HEK293 (cell line): ENCODE measurements at regions of chr3 and their contacts with region 1.

Region 1: GRCh38 chr3:51995346-51996163 is at the start of gene RPL29:
- H3K4me3 ChIP-seq: peak within 1 kb of the TSS; percentile 100
- H3K27ac ChIP-seq: peak within 1 kb of the TSS; percentile 98
- H3K4me1 ChIP-seq: no peaks in the 10 kb centered on the region
- CTCF ChIP-seq: no peak; the same call in 1 of the 2 replicates

Region 2: GRCh38 chr3:51941798-51942602 is 53.6 kb before region 1 on chr3 and contains the starts of genes PARP3 and RRP9:
- CTCF ChIA-PET with region 1: interaction called, 7 read pairs
- POLR2A ChIA-PET with region 1: interaction called, 20 read pairs
- H3K4me3 ChIP-seq: peak within 1 kb of the TSS; percentile 70
- H3K27ac ChIP-seq: peak within 1 kb of the TSS; percentile 81
- H3K4me1 ChIP-seq: peaks cover 4% of the 10 kb centered on the region
- CTCF ChIP-seq: peak; percentile 98

Region 3: DNA sequence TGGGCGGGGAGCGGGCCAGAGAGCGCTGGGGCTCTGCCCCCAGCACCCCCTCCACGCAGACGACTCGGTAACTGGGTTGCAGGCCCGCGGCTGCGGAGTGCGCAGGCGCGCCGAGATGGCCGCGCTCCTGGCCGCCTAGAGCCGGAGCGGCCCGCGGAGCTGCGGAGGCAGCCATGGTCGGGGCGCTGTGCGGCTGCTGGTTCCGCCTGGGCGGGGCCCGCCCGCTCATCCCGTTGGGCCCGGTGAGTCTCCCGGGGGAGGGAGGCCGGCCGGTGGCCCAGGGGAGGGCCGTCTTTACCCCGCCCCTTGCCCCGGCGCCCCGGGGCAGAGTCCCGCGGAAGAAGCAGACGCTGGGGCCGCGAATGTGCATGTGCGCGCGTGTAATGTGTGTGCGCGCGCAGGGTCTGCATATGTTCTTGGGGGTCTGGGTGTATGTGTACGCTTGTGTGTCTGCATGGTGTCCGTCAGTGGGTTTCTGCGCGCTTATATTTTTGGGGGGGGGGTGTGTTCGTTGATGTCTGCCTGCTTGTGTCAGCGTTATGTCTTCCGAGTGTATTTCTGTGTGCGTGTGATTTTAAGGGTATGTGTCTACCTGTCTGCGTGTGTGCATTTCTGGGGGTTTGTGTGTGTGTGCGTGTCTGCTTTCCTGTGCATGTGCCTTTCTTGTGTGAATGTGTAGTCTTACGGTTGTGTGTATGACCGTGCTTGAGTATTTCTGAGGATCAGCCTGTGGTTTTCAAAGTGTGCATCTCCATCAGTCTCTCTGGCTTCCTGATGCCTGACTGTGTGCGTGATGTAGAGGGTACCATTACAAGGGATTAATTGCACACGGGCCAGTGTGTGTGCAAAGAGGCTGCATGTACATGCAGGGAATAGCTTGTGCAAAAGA is 20.3 kb before region 1 on chr3 and contains the start of gene ABHD14A:
- CTCF ChIA-PET with region 1: no interaction called
- POLR2A ChIA-PET with region 1: interaction called, 11 read pairs
- H3K4me3 ChIP-seq: peak within 1 kb of the TSS; percentile 44
- H3K27ac ChIP-seq: no peak within 1 kb of the TSS; the same call in 1 of the 2 replicates
- H3K4me1 ChIP-seq: no peaks in the 10 kb centered on the region
- CTCF ChIP-seq: no peak

Region 4: GRCh38 chr3:51982782-51983577 is 12.6 kb before region 1 on chr3 and contains the start of gene ACY1:
- CTCF ChIA-PET with region 1: interaction called, 5 read pairs
- POLR2A ChIA-PET with region 1: interaction called, 47 read pairs
- H3K4me3 ChIP-seq: peak within 1 kb of the TSS; percentile 41
- H3K27ac ChIP-seq: peak within 1 kb of the TSS; percentile 60; the same call in 1 of the 2 replicates
- H3K4me1 ChIP-seq: no peaks in the 10 kb centered on the region
- CTCF ChIP-seq: no peak; the same call in none of the 2 replicates

Region 5: GRCh38 chr3:52099001-52099401 is 103.4 kb after region 1 on chr3:
- CTCF ChIA-PET with region 1: no interaction called
- POLR2A ChIA-PET with region 1: no interaction called
- H3K4me3 ChIP-seq: no peak overlapping the region
- H3K27ac ChIP-seq: no peak overlapping the region
- H3K4me1 ChIP-seq: no peaks in the 10 kb centered on the region
- CTCF ChIP-seq: no peak

Region 6: DNA sequence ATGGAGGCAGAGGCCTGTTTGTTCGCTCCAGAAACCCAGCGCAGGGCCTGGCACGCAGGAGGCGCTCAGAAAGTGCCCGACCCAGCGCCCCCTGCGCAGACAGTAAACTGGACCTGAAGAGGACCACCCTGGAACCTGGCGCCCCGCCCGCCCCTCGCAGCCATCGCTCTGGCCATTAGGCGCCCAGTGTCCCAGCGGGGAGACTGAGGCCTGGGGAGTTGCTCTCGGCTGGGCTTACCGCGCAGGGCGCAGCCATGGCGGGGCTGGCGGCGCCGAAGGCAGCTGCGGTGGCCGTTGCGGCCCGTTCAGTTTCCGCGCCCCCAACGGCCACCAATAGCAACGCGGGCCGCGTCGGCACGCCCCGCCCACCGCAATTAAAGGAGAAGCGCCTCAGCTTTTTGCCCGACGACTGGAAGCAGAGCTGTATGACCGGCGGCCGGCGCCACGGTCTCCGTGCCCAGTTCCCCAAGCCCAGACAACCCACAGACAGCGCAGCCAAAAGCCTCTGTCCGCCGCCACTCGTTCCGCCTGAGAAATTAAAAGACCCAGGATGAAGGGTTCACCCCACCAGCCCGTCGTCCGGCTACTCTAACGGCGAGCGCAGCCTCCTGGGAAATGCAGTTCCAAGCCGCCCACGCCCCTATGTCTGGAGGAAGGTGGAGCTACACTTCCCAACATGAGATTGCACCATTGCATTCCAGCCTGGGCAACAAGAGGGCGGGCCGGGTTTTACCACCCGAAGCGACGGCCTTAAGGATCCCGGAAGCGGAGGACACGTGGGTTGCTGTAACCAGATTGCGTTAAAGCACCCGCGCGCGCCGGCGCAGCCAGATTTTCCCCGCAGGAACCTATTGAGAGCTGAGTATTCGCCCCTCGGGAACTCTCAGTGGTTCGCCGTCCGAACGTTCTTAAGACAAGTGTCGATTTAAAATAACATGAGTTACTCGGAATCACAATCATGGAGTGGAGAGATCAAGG is 158.9 kb after region 1 on chr3 and contains the start of gene POC1A:
- CTCF ChIA-PET with region 1: interaction called, 9 read pairs
- POLR2A ChIA-PET with region 1: interaction called, 13 read pairs
- H3K4me3 ChIP-seq: peak within 1 kb of the TSS; percentile 97
- H3K27ac ChIP-seq: peak within 1 kb of the TSS; percentile 74
- H3K4me1 ChIP-seq: no peaks in the 10 kb centered on the region
- CTCF ChIP-seq: peak; percentile 56

Region 7: GRCh38 chr3:52787672-52788625 is 792.4 kb after region 1 on chr3:
- CTCF ChIA-PET with region 1: no interaction called
- POLR2A ChIA-PET with region 1: no interaction called
- H3K4me3 ChIP-seq: no peak overlapping the region
- H3K27ac ChIP-seq: no peak overlapping the region
- H3K4me1 ChIP-seq: no peaks in the 10 kb centered on the region
- CTCF ChIP-seq: no peak